Calu3 (cell line): ENCODE measurements at regions of chr5 and their contacts with region 1.

Region 1: DNA sequence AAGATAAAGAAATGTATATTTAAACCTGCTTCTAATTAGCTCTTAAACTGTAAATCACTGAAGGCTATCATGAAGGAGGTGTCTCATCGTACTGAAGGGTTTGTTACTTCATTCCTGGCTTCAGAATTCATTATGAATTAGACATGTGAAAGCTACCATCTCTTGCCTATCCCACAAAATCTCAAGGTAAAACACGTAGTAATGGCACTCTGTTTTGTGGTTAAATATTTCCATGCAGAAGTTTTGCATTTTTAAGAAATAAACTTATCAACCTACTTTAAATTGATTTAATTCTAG is 490.7 kb upstream of the NUDT12 start:
- DNase-seq: no peak
- H3K4me3 Mint-ChIP-seq: no peak overlapping the region
- H3K27ac Mint-ChIP-seq: no peak overlapping the region
- H3K4me1 Mint-ChIP-seq: no peaks in the 10 kb centered on the region
- H3K27me3 Mint-ChIP-seq: no peaks in the 10 kb centered on the region
- CTCF ChIP-seq: no peak

Region 2: GRCh38 chr5:103690676-103691075 is 362.6 kb before region 1 on chr5:
- CTCF ChIA-PET with region 1: no interaction called
- intact Hi-C with region 1: loop called (anchors 5 kb)
- DNase-seq: no peak
- H3K4me3 Mint-ChIP-seq: no peak overlapping the region
- H3K27ac Mint-ChIP-seq: no peak overlapping the region
- H3K4me1 Mint-ChIP-seq: no peaks in the 10 kb centered on the region
- H3K27me3 Mint-ChIP-seq: no peaks in the 10 kb centered on the region
- CTCF ChIP-seq: no peak